ENCODE measurements at regions of chr13 and their contacts with region 1.

Region 1: GRCh38 chr13:48412881-48413351 is at the start of gene LPAR6:
- DNase-seq: peak; percentile 74
- H3K4me3 Mint-ChIP-seq: peak within 1 kb of the TSS; percentile 86
- H3K27ac Mint-ChIP-seq: peak within 1 kb of the TSS; percentile 84
- H3K4me1 Mint-ChIP-seq: peaks cover 37% of the 10 kb centered on the region
- H3K27me3 Mint-ChIP-seq: no peaks in the 10 kb centered on the region
- total RNA-seq, gene LPAR6: 3.9 and 4.2 TPM in 2 replicates

Region 2: GRCh38 chr13:48094781-48095502 is 318.0 kb before region 1 on chr13 and contains the start of gene MED4:
- intact Hi-C with region 1: loop called (anchors 5 kb)
- DNase-seq: peak; percentile 100
- H3K4me3 Mint-ChIP-seq: peak within 1 kb of the TSS; percentile 92
- H3K27ac Mint-ChIP-seq: peak within 1 kb of the TSS; percentile 89
- H3K4me1 Mint-ChIP-seq: peaks cover 24% of the 10 kb centered on the region
- H3K27me3 Mint-ChIP-seq: peaks cover 7% of the 10 kb centered on the region
- total RNA-seq, gene MED4: 61.8 and 63.5 TPM in 2 replicates

Region 3: DNA sequence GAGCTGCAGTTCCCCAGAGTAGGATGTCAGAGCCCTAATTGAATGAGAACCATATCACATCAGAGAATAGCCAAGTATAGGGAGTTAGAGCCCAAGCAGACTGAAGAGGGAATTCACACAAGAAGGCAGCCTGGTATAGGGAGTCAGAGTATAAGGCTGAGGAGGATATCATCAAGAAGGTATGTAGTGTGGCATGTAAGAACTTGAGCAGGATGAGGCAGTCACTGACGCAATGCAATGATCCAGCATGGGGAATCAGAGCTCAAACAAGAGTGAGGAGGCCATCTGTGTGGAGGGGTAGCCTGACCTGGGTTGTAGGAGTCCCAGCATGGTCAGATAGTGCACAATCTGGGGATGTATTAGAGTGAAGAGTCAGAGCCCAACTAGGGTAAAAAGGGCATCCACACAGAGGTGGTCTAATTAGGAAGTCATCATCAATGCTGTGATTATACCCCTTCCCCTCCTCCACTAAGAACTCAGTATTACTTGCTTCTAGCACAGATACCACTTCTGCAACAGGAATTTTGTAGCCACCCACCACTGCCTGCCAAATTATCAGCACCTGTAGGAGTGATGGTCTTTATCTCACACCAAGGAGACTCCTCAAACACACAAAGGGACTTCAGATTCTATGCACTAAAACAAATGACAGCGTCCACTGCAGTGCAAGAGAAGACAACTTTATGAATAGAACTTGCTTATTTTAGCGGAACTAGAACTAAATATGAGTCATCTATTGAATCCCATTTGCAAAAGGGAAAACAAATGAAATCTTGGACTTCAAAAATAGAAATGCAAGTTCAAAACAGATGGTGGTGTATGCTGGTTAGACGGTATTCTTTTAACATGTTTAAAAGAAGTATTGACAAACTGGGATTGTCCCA is 670.0 kb after region 1 on chr13:
- intact Hi-C with region 1: no loop called
- DNase-seq: no peak
- H3K4me3 Mint-ChIP-seq: no peak overlapping the region
- H3K27ac Mint-ChIP-seq: no peak overlapping the region
- H3K4me1 Mint-ChIP-seq: peaks cover 7% of the 10 kb centered on the region
- H3K27me3 Mint-ChIP-seq: no peaks in the 10 kb centered on the region

Measured in activated CD4-positive, alpha-beta T cell treated with anti-CD3 and anti-CD28 coated beads, Interleukin-2, amount 10 ng/mL, durations not matched to agents 24 days and 14 days (primary cell).